Posterior cingulate gyrus (tissue), 11 donors: ENCODE measurements at regions of chr11 and their contacts with region 1.

Region 1: GRCh38 chr11:123246749-123247495 is 51.9 kb upstream of the CLMP start:
- DNase-seq: peak; percentile 62 to 96 (median 84)

Region 2: DNA sequence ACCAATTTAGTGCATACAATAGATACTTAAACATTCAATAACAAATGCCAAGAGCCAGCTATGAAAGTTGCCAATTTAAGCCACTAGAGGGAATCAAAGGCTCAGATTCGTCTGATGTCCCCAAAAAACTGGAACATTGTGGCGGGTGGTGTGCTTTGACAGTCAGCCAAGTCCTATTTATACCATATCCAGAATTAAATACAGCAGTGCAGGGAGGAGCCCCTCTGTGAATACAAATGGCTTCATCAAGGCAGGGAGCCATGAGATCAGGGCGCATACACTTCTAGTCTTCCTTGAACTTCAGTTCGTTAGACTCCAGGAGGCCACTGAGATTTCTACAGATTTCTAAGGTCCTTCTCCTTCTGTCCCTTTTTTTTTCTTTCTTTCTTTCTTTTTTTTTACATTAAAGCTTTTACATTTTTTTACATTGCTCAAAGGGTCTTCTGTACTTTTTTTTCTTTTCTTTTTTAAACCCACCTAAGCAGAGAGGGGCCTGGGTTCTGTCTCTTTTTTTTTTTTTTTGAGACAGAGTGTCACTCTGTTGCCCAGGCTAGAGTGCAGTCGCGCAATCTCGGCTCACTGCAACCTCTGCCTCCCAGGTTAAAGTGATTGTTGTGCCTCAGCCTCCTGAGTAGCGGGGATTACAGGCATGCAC is 143.5 kb before region 1 on chr11:
- intact Hi-C with region 1: loop called (anchors 2 kb)
- DNase-seq: peak in 9 of 10 donors; percentile 17 to 88 (median 44)

Region 3: GRCh38 chr11:123110356-123110755 is 136.6 kb before region 1 on chr11:
- intact Hi-C with region 1: loop called (anchors 2 kb)
- DNase-seq: no peak

Region 4: DNA sequence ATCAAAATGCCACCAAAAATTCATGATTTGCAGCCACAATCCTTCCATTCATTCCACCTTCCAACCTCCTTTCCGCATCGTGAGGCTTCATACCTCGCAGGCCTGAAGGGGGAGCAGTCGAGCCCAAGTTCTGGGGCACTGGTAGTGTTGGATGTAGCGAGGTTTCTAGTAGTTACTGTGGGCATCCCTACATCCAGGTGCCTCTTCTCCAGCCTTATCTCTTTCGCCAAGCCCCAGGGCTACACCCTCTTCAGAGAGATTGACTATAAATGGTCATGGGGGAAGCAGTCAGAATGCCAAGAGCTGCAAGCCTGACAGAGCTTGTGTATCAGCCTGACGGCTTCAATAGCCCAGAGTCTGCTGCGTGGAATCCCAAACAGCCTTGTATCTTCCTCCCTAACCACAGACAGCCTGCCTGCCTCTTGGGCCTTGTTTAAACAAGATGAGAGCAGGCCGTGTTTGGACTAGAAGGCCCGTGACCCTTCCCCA is 80.8 kb before region 1 on chr11:
- intact Hi-C with region 1: loop called (anchors 5 kb)
- DNase-seq: peak in 3 of 10 donors; percentile 33 to 51 (median 43)

Region 5: GRCh38 chr11:123478352-123478987 is 231.5 kb after region 1 on chr11:
- intact Hi-C with region 1: loop called (anchors 5 kb)
- DNase-seq: peak in 6 of 10 donors; percentile 30 to 92 (median 54)

Region 6: GRCh38 chr11:123511037-123511870 is 264.3 kb after region 1 on chr11:
- intact Hi-C with region 1: no loop called
- DNase-seq: peak; percentile 89 to 99 (median 95)